ENCODE measurements at regions of chr2 and their contacts with region 1.

Region 1: DNA sequence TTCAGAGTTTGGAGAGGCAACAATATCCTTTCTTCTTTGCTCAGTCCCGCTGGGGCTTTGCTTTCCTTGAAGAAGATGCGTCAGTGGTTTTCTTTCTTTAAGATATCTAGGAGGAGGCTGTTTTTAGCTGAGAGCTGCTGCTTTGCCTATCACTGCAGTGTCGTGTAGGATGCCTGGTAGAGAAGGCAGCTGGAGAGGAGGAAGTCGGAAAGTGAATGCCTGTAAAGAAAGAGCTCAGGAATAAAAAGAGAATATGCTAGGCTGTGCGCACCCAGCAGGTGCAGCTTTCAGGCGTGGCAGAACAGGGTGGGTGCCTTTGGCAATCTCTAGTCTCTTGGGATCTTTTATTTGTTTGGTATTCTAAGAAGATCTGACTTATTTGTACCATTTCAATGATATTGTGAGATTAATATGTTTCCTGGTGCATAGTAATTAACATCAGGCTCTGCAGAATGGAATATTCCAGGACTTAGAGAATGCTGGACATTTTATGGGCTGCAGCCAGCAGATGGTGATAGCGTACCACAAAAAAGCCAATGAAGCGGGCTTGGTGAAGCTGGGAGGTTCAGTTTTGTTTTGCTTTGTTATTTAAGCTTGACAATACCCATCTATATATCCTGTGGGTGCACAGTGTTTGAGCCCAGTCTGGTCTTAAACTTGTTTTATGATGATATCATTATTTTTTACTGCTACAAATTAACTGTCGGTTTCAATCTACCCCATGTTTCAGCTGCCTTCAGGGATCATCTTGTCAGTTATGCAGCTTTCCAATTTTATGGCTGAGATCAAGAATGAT is 34.9 kb downstream of the CAVIN2 start:
- DNase-seq: peak; percentile 60
- H3K4me3 ChIP-seq: no peak overlapping the region
- CTCF ChIP-seq: peak; percentile 79

Region 2: DNA sequence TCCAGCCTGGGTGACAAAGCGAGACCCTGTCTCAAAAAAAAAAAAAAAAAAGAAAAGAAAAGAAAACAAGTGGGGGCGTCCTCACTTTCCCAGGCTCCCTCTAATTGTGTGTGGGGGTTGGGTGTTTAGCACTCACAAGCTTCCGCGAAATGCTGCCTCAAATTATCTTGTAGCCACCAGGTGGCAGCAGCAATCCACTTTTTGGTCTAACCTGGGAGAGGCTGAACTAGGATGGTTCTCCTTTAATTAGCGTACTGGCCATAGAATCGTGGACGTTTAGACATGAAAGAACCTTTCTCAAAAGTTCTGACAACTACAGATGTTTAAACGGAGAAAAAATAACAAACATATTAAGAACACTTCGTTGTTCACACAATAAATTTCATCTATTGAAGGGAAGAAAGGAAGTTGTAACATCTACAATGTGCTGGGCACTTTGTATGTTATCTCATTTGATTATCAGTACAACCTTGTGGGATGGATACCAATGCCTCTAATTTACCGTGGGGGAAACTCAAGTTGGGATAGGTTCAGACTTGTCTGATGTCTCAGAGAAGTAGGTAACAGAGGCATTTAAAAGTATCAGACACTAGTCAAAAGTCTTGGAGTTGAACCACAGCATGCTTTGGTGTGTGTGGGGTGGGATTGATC is 256.8 kb before region 1 on chr2:
- in situ Hi-C with region 1: loop called (anchors 25 kb)
- DNase-seq: peak; percentile 77
- H3K4me3 ChIP-seq: no peak overlapping the region
- CTCF ChIP-seq: peak; percentile 68

Region 3: GRCh38 chr2:191656391-191656790 is 155.6 kb before region 1 on chr2:
- in situ Hi-C with region 1: no loop called
- DNase-seq: no peak
- H3K4me3 ChIP-seq: no peak overlapping the region
- CTCF ChIP-seq: no peak

Region 4: GRCh38 chr2:191846515-191847476 is 34.8 kb after region 1 on chr2 and contains the start of gene CAVIN2:
- in situ Hi-C with region 1: no loop called
- DNase-seq: peak; percentile 78
- H3K4me3 ChIP-seq: peak within 1 kb of the TSS; percentile 20
- CTCF ChIP-seq: no peak

Region 5: DNA sequence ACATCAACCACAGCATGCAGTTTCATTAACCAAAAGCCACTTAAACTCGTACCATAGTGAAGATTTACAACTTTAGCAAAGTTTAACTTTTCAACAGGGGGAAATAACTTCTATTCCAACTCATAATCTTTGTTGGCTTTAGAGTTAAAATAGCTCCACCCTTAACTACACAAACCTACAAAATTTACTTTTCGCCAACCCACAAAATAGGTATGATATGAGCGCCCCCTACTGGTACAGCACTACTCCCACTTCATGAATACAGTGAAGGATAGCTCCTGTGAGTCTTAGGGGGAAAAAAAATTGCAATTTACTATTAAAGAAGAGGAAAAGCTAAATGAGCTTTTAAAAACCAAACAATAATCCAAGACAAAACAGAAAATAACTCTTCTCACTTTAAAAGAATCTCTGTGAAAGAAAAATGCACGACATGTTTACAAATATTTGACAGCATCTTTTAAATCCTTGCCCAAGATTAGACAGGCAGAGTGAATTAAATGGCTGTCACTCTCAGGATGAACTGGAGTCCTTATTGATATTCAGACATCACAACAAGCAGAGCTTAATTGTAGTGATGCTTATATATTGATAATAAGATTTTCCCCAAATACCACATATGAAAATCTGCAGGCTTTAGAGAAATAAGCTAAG is 350.5 kb after region 1 on chr2:
- in situ Hi-C with region 1: loop called (anchors 10 kb)
- DNase-seq: peak; percentile 64
- H3K4me3 ChIP-seq: no peak overlapping the region
- CTCF ChIP-seq: peak; percentile 89